Heart right ventricle (tissue), 16 donors: ENCODE measurements at regions of chr13 and their contacts with region 1.

Region 1: DNA sequence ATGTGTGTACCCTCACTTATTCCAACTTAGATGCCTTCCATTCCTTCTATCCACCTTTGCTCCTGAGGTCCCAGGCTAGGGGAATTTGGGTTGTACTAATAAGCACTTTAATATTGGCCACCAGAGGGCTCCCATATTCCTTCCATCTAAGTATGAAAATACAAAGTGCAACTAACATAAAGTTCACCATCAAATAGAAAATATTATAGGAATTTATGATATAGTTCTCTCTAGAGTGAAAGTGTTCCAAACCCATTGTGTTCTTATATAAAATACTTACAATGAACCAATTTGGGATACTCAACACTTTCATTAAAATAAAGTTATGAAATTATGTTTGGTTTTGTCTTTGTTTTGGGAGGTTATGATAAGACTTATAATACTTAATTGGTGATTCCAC is 62.3 kb downstream of the ITGBL1 start:
- DNase-seq: peak in 1 of 2 donors; percentile 23
- ATAC-seq: peak in 3 of 8 donors; percentile 33 to 59 (median 46)
- H3K4me3 ChIP-seq: no peak overlapping the region
- H3K27ac ChIP-seq: no peak overlapping the region
- H3K4me1 ChIP-seq: no peaks in the 10 kb centered on the region
- H3K27me3 ChIP-seq: no peaks in the 10 kb centered on the region
- CTCF ChIP-seq: peak; percentile 34 to 77 (median 62)

Region 2: GRCh38 chr13:101492251-101492910 is 22.4 kb before region 1 on chr13:
- intact Hi-C with region 1: no loop called
- DNase-seq: no peak
- ATAC-seq: no peak
- H3K4me3 ChIP-seq: no peak overlapping the region
- H3K27ac ChIP-seq: no peak overlapping the region
- H3K4me1 ChIP-seq: peaks cover 0 to 5% (median 0%) of the 10 kb centered on the region in 9 donors
- H3K27me3 ChIP-seq: no peaks in the 10 kb centered on the region
- CTCF ChIP-seq: no peak

Region 3: DNA sequence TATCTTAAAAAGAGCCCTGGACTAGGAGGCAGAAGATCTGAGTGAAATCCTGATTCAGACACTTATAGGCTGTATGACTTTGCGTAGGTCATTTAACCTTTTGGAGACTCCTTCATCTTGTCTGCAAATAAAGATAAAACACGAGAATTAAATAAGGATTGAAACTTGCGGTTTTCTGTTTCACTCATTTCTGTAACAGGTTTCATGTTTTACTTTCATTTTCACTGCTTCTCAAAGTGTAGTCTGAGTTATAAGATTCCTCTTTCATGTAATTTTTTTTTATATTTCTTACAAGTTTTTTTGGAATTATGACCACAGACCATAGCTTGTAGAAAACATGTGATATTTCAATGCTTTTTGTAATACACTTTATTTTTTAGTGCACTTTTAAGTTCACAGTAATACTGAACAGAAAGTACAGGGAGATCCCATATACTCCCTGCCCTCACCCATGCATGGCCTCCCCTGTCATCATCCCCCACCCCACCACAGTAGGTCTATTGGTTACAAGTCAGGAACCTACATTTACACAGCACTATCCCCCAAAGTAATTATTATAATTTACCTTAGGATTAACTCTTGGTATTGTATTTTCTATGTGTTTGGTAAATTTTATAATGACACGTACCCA is 112.3 kb after region 1 on chr13:
- intact Hi-C with region 1: loop called in 1 of 10 experiments (anchors 10 kb)
- DNase-seq: no peak
- ATAC-seq: peak in 3 of 8 donors; percentile 49 to 57 (median 53)
- H3K4me3 ChIP-seq: peak overlapping the region in 6 of 10 donors; percentile 20 to 45 (median 33)
- H3K27ac ChIP-seq: peak overlapping the region in 5 of 10 donors; percentile 13 to 65 (median 33)
- H3K4me1 ChIP-seq: peaks cover 0 to 28% (median 0%) of the 10 kb centered on the region in 9 donors
- H3K27me3 ChIP-seq: no peaks in the 10 kb centered on the region
- CTCF ChIP-seq: no peak

Region 4: GRCh38 chr13:101757446-101758039 is 242.8 kb after region 1 on chr13:
- intact Hi-C with region 1: loop called in 9 of 10 experiments (anchors 2 to 5 kb)
- DNase-seq: no peak
- ATAC-seq: peak in 4 of 8 donors; percentile 34 to 68 (median 58)
- H3K4me3 ChIP-seq: no peak overlapping the region
- H3K27ac ChIP-seq: no peak overlapping the region
- H3K4me1 ChIP-seq: no peaks in the 10 kb centered on the region
- H3K27me3 ChIP-seq: no peaks in the 10 kb centered on the region
- CTCF ChIP-seq: peak in 8 of 9 donors; percentile 21 to 64 (median 50)

Region 5: DNA sequence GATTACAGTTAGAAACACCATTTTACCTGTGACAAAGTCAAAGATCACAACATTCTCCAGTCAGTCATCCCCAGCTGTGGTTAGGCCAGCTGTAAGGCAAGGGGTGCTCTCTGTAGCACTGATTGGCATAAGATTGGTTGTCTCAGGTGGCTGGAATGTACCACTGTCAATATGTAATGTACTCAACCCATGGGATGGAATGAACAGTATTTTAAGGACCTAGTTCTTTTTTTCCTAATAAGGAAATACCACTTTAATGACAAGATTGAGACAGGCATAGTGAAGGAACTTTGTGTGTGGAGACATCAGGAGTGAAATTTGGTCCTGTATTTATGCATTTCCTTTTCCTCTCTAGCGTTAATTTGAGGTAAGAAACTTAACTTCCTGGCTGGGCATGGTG is 248.4 kb after region 1 on chr13:
- intact Hi-C with region 1: loop called in 8 of 10 experiments (anchors 2 to 5 kb)
- DNase-seq: no peak
- ATAC-seq: no peak
- H3K4me3 ChIP-seq: no peak overlapping the region
- H3K27ac ChIP-seq: no peak overlapping the region
- H3K4me1 ChIP-seq: no peaks in the 10 kb centered on the region
- H3K27me3 ChIP-seq: no peaks in the 10 kb centered on the region
- CTCF ChIP-seq: no peak

Region 6: DNA sequence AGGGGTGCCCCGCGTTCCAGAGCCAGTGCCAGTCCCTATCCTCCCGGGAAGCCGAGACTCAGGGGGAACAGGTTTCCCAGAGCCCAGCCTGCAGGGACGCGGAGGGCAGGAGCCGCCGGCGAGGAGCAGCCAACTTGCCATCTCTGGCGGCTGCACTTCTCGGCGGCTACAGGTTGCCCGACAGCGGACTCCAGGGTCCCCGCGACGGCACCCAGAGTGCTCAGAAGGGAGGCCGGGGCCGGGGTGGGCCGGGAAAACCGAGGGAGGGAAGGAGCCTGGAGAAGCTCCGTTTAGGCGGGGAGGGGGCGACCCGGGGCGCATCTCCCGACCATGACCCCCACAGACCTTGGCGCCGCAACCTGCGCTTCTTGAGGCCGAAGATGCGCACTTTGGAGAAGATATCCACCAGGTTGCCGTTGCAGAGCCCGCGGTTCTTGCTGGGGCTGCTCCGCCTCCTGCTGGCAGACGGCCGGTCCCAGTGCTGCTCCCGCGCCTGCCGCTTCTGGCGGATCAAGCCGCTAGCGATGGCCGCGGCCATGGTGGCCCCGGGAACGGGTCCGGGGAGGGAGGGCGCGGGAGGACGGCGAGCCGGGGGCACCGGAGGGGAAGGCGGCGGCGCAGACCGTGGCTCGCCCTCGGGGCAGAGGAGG is 401.4 kb after region 1 on chr13:
- intact Hi-C with region 1: loop called in 1 of 10 experiments (anchors 5 kb)
- DNase-seq: peak in 1 of 2 donors; percentile 40
- ATAC-seq: peak; percentile 25 to 92 (median 80)
- H3K4me3 ChIP-seq: peak overlapping the region; percentile 13 to 57 (median 48)
- H3K27ac ChIP-seq: no peak overlapping the region
- H3K4me1 ChIP-seq: peaks cover 0 to 20% (median 6%) of the 10 kb centered on the region in 9 donors
- H3K27me3 ChIP-seq: peaks cover 0 to 87% (median 68%) of the 10 kb centered on the region in 7 donors
- CTCF ChIP-seq: peak in 7 of 9 donors; percentile 29 to 60 (median 51)

Region 7: DNA sequence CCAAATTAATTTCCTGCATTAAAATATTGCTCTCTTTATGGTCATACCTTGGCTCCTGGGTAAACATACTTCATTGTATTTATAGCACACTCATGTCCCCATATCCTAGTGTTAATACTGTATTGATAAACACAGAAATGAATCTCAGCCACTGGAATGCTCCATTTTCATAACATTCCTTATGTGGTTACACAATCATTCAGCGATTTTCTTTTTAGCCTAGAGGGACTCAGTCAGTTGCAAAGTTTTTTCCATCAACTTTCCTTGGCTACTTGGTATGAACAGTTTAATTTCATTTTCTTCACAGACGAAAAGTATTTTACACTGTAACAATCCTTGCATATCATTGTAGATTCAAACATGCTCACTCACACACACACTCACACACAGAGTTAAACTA is 415.5 kb after region 1 on chr13:
- intact Hi-C with region 1: loop called in 1 of 10 experiments (anchors 10 kb)
- DNase-seq: no peak
- ATAC-seq: no peak
- H3K4me3 ChIP-seq: no peak overlapping the region
- H3K27ac ChIP-seq: no peak overlapping the region
- H3K4me1 ChIP-seq: no peaks in the 10 kb centered on the region
- H3K27me3 ChIP-seq: peaks cover 0 to 3% (median 0%) of the 10 kb centered on the region in 7 donors
- CTCF ChIP-seq: no peak

Region 8: GRCh38 chr13:102555917-102556553 is 1041.2 kb after region 1 on chr13:
- intact Hi-C with region 1: loop called in 1 of 10 experiments (anchors 10 kb)
- DNase-seq: no peak
- ATAC-seq: peak in 1 of 8 donors; percentile 44
- H3K4me3 ChIP-seq: no peak overlapping the region
- H3K27ac ChIP-seq: no peak overlapping the region
- H3K4me1 ChIP-seq: no peaks in the 10 kb centered on the region
- H3K27me3 ChIP-seq: no peaks in the 10 kb centered on the region
- CTCF ChIP-seq: peak in 7 of 9 donors; percentile 45 to 65 (median 57)